Heart right ventricle (tissue), 16 donors: ENCODE measurements at regions of chr3 and their contacts with region 1.

Region 1: GRCh38 chr3:150286390-150287147 is 121.5 kb upstream of the TSC22D2 start:
- DNase-seq: no peak
- ATAC-seq: peak in 6 of 8 donors; percentile 48 to 82 (median 75)
- H3K4me3 ChIP-seq: no peak overlapping the region
- H3K27ac ChIP-seq: no peak overlapping the region
- H3K4me1 ChIP-seq: peaks cover 0 to 2% (median 0%) of the 10 kb centered on the region in 9 donors
- H3K27me3 ChIP-seq: no peaks in the 10 kb centered on the region
- CTCF ChIP-seq: peak; percentile 33 to 70 (median 57)

Region 2: DNA sequence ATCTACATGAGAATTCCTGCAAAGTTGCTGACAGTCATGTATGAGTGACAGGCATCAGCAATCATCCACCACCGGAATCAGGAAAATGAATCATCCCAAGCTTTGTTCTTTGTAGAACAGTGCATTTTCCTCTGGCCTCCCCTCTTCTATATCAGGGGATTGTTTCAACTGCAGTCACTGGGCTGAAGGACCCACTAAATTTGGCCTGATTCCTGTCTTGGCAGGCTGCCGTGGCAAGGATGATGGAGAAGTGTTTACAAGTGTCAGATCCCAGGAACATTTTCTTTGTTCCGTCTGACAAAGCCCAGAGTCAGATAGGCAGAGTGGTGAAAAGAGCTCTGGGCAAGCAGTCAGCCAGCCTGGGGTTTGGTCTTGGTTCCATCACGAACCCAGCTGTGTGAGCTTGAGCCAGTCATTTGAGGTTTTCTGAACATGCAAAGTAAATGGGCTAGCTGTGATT is 53.5 kb before region 1 on chr3:
- intact Hi-C with region 1: loop called in 1 of 10 experiments (anchors 5 kb)
- DNase-seq: peak; percentile 77 to 82
- ATAC-seq: peak; percentile 78 to 98 (median 94)
- H3K4me3 ChIP-seq: no peak overlapping the region
- H3K27ac ChIP-seq: peak overlapping the region in 8 of 10 donors; percentile 7 to 56 (median 40)
- H3K4me1 ChIP-seq: peaks cover 0 to 48% (median 22%) of the 10 kb centered on the region in 9 donors
- H3K27me3 ChIP-seq: no peaks in the 10 kb centered on the region
- CTCF ChIP-seq: no peak

Region 3: GRCh38 chr3:150414258-150414657 is 127.7 kb after region 1 on chr3:
- intact Hi-C with region 1: loop called in 6 of 10 experiments (anchors 2 to 10 kb)
- DNase-seq: peak in 1 of 2 donors; percentile 44
- ATAC-seq: peak in 4 of 8 donors; percentile 26 to 60 (median 42)
- H3K4me3 ChIP-seq: peak overlapping the region in 7 of 10 donors; percentile 19 to 92 (median 85)
- H3K27ac ChIP-seq: peak overlapping the region in 4 of 10 donors; percentile 1 to 32 (median 15)
- H3K4me1 ChIP-seq: peaks cover 8 to 80% (median 66%) of the 10 kb centered on the region in 9 donors
- H3K27me3 ChIP-seq: no peaks in the 10 kb centered on the region
- CTCF ChIP-seq: no peak